K562 (cell line): ENCODE measurements at regions of chr1 and their contacts with region 1.

Region 1: DNA sequence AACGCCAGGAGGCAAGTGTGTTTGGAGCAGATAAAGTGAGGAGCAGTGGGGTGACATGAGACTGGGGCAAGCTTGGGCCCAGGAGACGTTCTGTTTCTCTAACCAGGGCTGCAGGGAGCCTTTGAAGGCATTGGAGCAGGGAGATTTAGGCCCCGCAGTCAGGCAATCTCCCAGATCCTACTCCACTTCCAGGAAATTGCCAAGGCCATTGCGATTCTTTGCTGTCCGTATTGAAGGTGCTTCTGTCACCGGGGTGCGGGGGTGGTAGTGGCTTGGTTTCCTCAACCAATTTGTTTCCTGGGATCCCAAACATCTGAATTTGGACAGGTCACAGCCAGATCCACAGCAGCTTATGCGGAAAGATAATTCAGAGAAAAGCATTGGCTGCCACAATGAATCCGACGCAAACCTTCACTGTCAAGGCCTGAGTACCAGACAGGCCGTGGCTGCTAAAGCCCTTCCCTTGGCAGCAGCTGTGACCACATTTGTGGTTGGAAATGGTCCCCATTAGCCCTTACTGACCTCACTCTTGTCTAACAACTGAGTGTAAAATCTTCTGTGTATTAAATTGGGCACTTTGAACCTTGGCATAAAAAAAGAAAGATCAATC is 385.6 kb downstream of the PTPRU start:
- DNase-seq: peak in 1 of 4 experiments; percentile 3
- ATAC-seq: no peak
- H3K4me3 ChIP-seq: no peak overlapping the region
- H3K27ac ChIP-seq: no peak overlapping the region
- H3K4me1 ChIP-seq: no peaks in the 10 kb centered on the region
- H3K27me3 ChIP-seq: peaks cover 0 to 40% of the 10 kb centered on the region in 2 experiments; a peak in 3 of 5 replicates
- CTCF ChIP-seq: no peak
- EP300 ChIP-seq: no peak
- POLR2A ChIP-seq: no peak
- RAD21 ChIP-seq: no peak

Region 2: DNA sequence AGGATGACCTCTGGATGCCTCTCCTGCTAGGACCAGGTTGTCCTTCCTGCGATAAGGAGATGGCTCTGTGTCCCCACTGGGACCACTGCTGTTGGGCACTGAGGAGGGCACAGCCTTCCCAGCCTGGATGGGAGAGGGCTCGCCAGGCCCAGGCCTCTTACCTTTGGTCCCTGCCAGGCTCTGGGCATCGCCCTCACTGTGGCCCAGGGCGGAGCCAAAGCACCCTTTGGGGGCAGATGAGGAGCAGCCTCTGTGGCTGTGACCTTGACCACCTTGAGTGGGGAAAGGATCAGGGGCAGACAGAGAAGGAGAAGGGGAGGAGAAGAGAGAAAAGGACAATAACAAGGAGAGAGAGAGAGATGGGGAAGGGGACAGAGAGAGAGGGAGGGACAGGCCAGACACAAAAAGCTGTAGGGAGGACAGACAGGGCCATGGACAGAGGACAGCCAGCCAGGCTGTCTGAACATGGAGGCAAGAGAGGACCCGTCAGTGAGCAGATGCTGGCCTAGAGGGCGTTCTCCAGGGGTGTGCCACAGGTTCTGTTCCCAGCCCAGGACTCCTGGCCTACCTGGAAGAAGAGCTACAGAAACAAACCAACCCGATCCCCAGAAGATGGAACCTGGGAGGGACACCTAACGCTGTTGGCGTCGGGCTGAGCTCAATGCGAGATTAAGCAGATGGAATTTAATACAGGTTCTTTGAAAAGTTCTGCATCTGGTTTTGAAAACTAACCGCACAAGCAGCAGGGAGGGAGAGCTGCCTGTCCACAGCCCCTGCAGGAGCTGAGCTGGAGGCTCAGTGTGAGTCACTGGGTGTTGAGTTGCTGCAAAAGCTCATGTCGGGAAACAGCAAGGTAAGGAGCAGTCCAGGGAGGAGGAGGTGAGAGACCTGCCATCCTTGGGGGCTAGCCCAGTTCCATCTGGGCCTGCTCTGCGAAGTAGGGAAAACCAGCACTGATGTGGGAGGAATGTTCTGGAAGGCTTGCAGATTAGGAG is 123.5 kb before region 1 on chr1:
- CTCF ChIA-PET with region 1: no interaction called
- POLR2A ChIA-PET with region 1: no interaction called
- in situ Hi-C with region 1: no loop called
- intact Hi-C with region 1: no loop called
- DNase-seq: no peak
- ATAC-seq: no peak
- H3K4me3 ChIP-seq: no peak overlapping the region
- H3K27ac ChIP-seq: no peak overlapping the region
- H3K4me1 ChIP-seq: no peaks in the 10 kb centered on the region
- H3K27me3 ChIP-seq: peaks cover 0 to 35% of the 10 kb centered on the region in 2 experiments; a peak in 3 of 5 replicates
- CTCF ChIP-seq: no peak
- EP300 ChIP-seq: no peak
- POLR2A ChIP-seq: no peak
- RAD21 ChIP-seq: no peak

Region 3: GRCh38 chr1:29607236-29607635 is 14.7 kb before region 1 on chr1:
- CTCF ChIA-PET with region 1: no interaction called
- POLR2A ChIA-PET with region 1: interaction called, 10 read pairs
- in situ Hi-C with region 1: no loop called
- intact Hi-C with region 1: no loop called
- DNase-seq: no peak
- ATAC-seq: no peak
- H3K4me3 ChIP-seq: no peak overlapping the region
- H3K27ac ChIP-seq: no peak overlapping the region
- H3K4me1 ChIP-seq: no peaks in the 10 kb centered on the region
- H3K27me3 ChIP-seq: no peaks in the 10 kb centered on the region
- CTCF ChIP-seq: no peak
- EP300 ChIP-seq: no peak
- POLR2A ChIP-seq: no peak
- RAD21 ChIP-seq: no peak